ENCODE measurements at regions of chr19 and their contacts with region 1.

Region 1: DNA sequence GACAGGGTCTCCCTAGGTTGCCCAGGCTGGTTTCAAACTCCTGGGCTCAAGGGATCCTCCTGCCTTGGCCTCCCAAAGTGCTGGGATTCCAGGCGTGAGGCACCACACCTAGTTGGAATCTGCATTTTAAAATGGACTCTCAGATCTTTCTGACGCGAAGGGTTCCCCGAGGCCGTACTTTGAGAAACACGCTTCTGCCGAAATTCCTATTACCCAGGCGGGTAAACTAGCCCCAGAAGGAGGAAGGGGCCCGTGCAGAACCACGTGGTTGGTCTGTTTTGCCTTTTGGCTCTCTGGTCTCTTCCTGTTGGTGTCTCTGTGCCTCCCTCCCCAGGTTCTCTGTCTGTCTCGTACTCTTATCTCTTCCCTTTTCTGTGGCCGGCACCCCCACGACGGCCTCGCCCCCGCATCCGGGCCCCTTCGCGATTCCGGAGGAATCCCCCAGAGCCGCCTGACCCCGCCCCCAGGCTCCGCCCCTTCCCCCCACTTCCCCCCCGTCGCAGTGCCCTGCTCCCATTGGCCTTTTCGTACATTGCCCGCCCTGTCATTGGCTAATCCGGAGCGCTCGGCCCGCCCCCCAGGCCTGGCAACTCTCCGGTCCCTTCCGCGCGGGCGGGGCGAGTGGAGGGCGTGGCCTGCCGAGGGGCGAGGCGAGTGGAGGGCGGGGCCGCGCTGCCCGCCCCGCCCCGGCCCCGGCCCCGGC is at the start of gene TNFAIP8L1:
- DNase-seq: peak; percentile 100
- H3K4me3 ChIP-seq: peak within 1 kb of the TSS; percentile 72 to 89
- H3K27ac ChIP-seq: peak within 1 kb of the TSS; percentile 54 to 62; a peak in 3 of 4 replicates
- H3K4me1 ChIP-seq: peaks cover 3 to 20% of the 10 kb centered on the region in 2 experiments; a peak in 1 of 4 replicates
- H3K27me3 ChIP-seq: no peaks in the 10 kb centered on the region
- CTCF ChIP-seq: no peak
- EP300 ChIP-seq: no peak
- RAD21 ChIP-seq: no peak
- polyA plus RNA-seq, gene TNFAIP8L1: 5.7 and 6.4 TPM in 2 replicates

Region 2: DNA sequence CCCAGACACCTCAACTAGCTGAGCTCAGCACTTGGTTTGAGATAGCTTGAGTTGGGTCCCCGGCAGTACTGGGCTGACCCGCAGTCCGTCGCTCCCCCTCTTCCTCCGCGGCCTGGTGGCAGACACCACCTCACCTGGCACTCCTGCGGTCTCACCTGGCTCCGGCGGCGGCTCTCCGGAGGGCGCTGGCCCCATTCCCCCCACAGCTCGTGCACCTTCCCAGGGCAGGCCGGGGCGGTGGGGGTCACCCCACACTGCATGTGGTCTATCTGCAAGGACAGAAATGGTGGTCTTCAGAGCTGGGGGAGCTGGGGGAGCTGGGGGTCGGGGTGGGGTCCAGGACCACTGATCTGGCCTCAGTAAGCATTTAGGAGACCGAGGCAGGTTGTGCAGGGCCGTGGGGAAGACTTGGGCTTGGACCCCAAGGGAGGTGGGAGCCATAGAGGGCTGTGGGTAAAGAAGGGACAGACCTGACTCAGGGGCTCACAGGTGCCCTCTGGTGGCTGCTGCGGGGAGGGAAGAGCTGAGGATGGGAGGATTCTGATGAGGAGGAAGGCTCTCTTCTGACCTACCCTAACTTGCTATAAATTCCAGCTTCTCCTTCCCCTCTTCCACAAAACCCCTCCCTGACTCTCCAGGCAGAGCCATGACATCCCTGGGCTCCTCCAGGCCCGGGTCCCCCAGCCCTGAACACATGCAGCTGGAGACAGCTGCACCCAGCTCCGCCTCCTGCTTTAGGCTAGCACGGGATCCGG is 114.0 kb before region 1 on chr19:
- CTCF ChIA-PET with region 1: interaction called, 13 read pairs
- POLR2A ChIA-PET with region 1: no interaction called
- DNase-seq: peak; percentile 79
- H3K4me3 ChIP-seq: no peak overlapping the region
- H3K27ac ChIP-seq: no peak overlapping the region
- H3K4me1 ChIP-seq: no peaks in the 10 kb centered on the region
- H3K27me3 ChIP-seq: no peaks in the 10 kb centered on the region
- CTCF ChIP-seq: peak; percentile 67
- EP300 ChIP-seq: no peak
- RAD21 ChIP-seq: peak; percentile 38

Region 3: GRCh38 chr19:4547303-4548237 is 91.4 kb before region 1 on chr19:
- CTCF ChIA-PET with region 1: interaction called, 21 read pairs
- POLR2A ChIA-PET with region 1: no interaction called
- DNase-seq: peak; percentile 59
- H3K4me3 ChIP-seq: no peak overlapping the region
- H3K27ac ChIP-seq: no peak overlapping the region
- H3K4me1 ChIP-seq: no peaks in the 10 kb centered on the region
- H3K27me3 ChIP-seq: peaks cover 10% of the 10 kb centered on the region
- CTCF ChIP-seq: peak; percentile 50
- EP300 ChIP-seq: no peak
- RAD21 ChIP-seq: no peak

Region 4: DNA sequence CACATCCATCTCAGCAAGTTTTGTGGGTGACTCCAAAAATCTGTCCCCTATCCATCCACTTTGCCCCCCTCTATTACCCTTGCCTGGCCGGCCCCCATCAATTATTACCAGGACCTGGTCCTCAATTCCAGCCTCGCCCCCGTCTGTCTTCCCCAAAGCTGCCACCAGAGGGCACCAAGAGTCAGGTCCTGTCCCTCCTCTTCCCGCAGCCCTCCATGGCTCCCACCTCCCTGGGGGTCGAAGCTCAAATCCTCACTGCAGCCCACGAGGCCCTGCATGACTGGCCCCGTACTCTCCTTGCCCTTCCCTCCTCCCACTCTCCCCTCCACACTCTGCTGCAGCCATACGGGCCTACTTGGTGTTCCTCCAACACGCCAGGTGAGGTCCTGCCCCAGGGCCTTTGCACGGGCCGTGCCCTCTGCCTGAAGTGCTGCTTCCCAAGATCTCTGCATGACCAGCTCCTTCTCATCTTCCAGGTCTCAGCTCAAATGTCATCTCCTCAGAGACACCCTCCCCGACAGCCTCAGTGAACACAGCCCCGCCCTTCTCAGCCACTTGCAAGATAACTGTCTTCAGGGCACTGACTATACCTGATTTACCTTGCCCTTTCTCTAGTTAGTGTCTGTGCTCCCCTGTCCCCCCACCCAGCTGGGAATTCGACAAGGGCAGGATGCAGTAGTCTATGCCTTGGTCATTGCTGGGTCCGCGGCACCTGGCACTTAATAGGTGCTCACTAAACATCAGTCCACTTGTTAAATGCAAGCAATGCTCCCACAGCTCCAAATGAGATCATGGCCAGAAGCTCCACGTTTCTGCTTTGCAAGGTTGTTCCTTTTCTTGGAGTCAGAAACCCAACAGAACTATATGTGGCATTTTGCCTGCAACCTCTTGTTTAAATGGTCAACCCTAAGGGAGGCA is 62.7 kb before region 1 on chr19:
- CTCF ChIA-PET with region 1: interaction called, 200 read pairs
- POLR2A ChIA-PET with region 1: no interaction called
- DNase-seq: peak; percentile 85
- H3K4me3 ChIP-seq: peak overlapping the region in 1 of 2 experiments; percentile 39; a peak in 1 of 4 replicates
- H3K27ac ChIP-seq: peak overlapping the region in 1 of 2 experiments; percentile 49; a peak in 1 of 4 replicates
- H3K4me1 ChIP-seq: no peaks in the 10 kb centered on the region; a peak in 1 of 4 replicates
- H3K27me3 ChIP-seq: peaks cover 14% of the 10 kb centered on the region; the same call in 1 of the 2 replicates
- CTCF ChIP-seq: peak; percentile 84
- EP300 ChIP-seq: no peak
- RAD21 ChIP-seq: peak; percentile 64

Region 5: GRCh38 chr19:4597975-4598671 is 40.9 kb before region 1 on chr19:
- CTCF ChIA-PET with region 1: interaction called, 93 read pairs
- POLR2A ChIA-PET with region 1: no interaction called
- DNase-seq: peak; percentile 86
- H3K4me3 ChIP-seq: peak overlapping the region; percentile 18 to 26; a peak in 2 of 4 replicates
- H3K27ac ChIP-seq: no peak overlapping the region
- H3K4me1 ChIP-seq: peaks cover 0 to 3% of the 10 kb centered on the region in 2 experiments; a peak in 1 of 4 replicates
- H3K27me3 ChIP-seq: peaks cover 25% of the 10 kb centered on the region; the same call in 1 of the 2 replicates
- CTCF ChIP-seq: no peak
- EP300 ChIP-seq: no peak
- RAD21 ChIP-seq: no peak

Region 6: DNA sequence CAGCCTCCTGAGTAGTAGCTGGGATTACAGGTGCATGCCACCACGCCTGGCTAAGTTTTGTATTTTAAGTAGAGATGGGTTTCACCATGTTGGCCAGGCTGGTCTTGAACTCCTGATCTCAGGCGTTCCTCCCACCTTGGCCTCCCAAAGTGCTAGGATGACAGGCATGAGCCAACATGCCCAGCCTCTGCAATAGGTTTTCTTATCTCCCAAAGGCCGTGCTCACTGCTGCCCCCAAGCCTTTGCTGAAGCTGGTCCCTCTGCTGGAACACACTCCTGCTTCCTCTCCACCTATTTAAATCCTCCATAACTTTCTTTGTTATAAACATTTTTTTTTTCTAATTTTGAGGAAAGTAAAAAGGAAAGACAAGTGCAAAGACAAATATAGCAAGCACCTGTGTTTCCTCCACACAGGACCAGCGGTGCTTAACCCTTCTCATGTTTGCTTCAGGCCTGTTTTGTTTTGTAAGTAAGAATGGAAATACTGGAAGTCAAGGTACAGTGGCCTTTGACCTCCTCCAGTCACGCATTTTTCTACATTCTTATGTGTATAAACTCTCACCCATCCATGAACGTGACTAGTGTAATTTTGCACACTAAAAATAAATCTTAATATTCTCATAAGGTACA is 14.1 kb before region 1 on chr19:
- CTCF ChIA-PET with region 1: interaction called, 21 read pairs
- POLR2A ChIA-PET with region 1: interaction called, 3 read pairs
- DNase-seq: no peak
- H3K4me3 ChIP-seq: no peak overlapping the region
- H3K27ac ChIP-seq: no peak overlapping the region
- H3K4me1 ChIP-seq: peaks cover 0 to 4% of the 10 kb centered on the region in 2 experiments; a peak in 1 of 4 replicates
- H3K27me3 ChIP-seq: peaks cover 5% of the 10 kb centered on the region
- CTCF ChIP-seq: peak; percentile 45
- EP300 ChIP-seq: no peak
- RAD21 ChIP-seq: no peak

Region 7: GRCh38 chr19:4759388-4760284 is 120.7 kb after region 1 on chr19:
- CTCF ChIA-PET with region 1: no interaction called
- POLR2A ChIA-PET with region 1: no interaction called
- DNase-seq: peak; percentile 99
- H3K4me3 ChIP-seq: peak overlapping the region; percentile 44 to 56
- H3K27ac ChIP-seq: peak overlapping the region in 1 of 2 experiments; percentile 61; a peak in 2 of 4 replicates
- H3K4me1 ChIP-seq: peaks cover 0 to 10% of the 10 kb centered on the region in 2 experiments; a peak in 1 of 4 replicates
- H3K27me3 ChIP-seq: no peaks in the 10 kb centered on the region; the same call in 1 of the 2 replicates
- CTCF ChIP-seq: no peak
- EP300 ChIP-seq: peak in 1 of 2 experiments; percentile 56; a peak in 2 of 4 replicates
- RAD21 ChIP-seq: peak; percentile 18; the same call in 1 of the 2 replicates